Cardiac septum (tissue), 1 donor: ENCODE measurements at regions of chr18 and their contacts with region 1.

Region 1: DNA sequence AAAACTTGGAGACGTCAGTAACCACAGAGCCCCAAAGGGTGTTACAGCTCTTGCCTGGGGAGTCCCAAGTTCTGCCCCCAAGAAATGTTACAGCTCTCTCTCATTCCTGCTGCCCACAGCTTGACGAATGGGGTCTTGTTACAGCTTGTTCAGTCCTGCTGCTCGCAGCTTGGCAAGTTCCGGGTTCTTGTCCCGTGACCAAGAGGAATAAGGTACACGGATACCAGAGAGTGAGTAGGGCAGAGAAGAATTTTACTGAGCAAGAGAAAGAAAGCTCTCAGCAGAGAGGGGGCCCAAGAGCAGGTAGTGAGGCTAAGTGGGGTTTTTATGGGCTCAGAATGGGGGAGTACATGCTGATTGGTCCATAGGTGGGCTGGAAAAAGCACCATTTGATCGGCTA is 27.2 kb downstream of the SLC39A6 start:
- DNase-seq: no peak

Region 2: DNA sequence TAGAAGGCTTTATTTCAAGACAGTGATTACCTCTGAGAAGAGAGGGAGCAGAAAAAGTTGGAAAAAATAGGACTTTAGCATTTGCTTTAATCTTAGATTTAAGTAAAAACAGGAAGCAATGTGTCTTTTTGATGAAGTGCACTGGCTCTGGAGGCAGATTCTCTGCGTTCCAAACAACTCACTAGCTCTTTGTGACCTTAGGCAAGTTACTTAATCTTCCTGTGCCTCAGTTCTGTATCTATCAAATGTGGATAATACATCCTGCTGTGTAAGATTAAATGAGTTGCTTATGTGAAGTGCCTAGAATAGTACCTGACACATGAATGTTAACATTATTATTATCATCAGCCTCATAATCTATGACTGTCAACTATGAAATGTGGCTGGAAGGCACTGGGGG is 76.9 kb before region 1 on chr18:
- intact Hi-C with region 1: no loop called
- DNase-seq: no peak

Region 3: DNA sequence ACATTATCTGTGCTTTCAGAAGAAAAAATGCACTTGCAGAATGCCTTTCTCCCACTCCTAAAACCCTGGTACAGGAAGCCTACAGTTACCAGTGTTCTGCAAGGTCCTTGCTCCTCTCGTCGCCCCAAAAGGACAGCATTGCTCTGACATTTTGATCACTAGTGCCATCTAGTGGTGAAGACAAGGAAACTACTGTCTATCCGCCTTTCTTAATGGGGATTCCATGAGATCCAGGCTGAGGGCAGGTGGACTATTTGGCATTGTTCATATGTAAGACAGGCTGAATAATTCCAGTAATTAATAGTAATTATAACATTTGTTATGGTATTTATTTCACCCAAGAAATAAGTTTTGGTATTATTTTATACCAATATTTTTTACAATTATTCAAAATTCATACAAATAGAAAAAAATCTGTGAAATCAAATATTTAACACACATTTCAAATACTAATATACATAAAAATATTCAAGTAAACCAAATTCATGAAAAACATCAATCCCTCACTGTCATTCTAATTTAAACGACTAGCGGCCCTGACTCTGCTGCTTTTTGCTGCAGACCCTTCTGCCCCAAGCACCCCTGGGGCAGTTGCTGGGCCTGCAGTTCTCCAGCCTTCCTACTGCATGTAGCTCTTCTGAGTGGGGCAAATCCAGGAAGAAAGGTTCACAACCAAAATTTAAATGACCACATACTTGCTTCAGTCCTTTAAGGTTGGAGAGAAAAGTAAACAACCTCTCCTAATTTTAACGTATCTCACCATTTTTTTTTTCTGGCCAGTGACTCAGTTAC is 707.8 kb after region 1 on chr18:
- intact Hi-C with region 1: loop called (anchors 10 kb)
- DNase-seq: no peak